ENCODE measurements at regions of chr3 and their contacts with region 1.

Region 1: GRCh38 chr3:132352541-132353143 is 35.4 kb downstream of the ACP3 start:
- DNase-seq: peak; percentile 43
- H3K4me3 Mint-ChIP-seq: no peak overlapping the region
- H3K27ac Mint-ChIP-seq: no peak overlapping the region
- H3K4me1 Mint-ChIP-seq: peaks cover 5% of the 10 kb centered on the region
- H3K27me3 Mint-ChIP-seq: no peaks in the 10 kb centered on the region

Region 2: DNA sequence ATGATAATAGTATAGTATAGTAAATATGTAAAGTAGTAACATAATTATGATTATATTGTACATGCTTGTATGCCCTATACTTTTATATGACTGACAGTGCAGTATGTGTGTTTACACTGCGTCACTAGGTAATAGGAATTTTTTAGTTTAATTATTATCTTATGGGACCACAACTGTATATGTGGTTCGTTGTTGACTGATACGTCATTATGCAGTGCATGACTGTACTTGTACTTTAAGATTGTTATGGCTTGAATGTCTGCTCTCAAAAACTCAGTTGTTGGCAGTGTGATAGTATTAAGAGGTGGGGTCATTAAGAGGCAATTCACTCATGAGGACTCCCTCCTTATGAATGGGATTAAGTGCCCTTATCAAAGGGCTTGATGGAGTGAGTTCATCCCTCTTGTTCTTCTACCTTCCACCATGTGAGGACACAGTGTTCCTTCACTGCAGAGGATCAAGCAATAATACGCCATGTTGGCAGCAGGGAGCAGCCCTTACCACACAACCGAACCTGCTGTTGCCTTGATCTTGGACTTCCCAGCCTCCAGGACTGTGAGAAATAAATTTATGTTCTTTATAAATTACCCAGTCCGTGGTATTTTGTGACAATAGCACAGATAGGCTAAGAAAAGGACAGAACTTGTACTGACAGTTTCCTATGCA is 1173.8 kb before region 1 on chr3:
- intact Hi-C with region 1: no loop called
- DNase-seq: no peak
- H3K4me3 Mint-ChIP-seq: no peak overlapping the region
- H3K27ac Mint-ChIP-seq: no peak overlapping the region
- H3K4me1 Mint-ChIP-seq: peaks cover 8% of the 10 kb centered on the region
- H3K27me3 Mint-ChIP-seq: peaks cover 3% of the 10 kb centered on the region

Region 3: GRCh38 chr3:132399054-132399929 is 46.6 kb after region 1 on chr3:
- intact Hi-C with region 1: loop called (anchors 1 kb)
- DNase-seq: no peak
- H3K4me3 Mint-ChIP-seq: no peak overlapping the region
- H3K27ac Mint-ChIP-seq: no peak overlapping the region
- H3K4me1 Mint-ChIP-seq: no peaks in the 10 kb centered on the region
- H3K27me3 Mint-ChIP-seq: peaks cover 18% of the 10 kb centered on the region

Region 4: DNA sequence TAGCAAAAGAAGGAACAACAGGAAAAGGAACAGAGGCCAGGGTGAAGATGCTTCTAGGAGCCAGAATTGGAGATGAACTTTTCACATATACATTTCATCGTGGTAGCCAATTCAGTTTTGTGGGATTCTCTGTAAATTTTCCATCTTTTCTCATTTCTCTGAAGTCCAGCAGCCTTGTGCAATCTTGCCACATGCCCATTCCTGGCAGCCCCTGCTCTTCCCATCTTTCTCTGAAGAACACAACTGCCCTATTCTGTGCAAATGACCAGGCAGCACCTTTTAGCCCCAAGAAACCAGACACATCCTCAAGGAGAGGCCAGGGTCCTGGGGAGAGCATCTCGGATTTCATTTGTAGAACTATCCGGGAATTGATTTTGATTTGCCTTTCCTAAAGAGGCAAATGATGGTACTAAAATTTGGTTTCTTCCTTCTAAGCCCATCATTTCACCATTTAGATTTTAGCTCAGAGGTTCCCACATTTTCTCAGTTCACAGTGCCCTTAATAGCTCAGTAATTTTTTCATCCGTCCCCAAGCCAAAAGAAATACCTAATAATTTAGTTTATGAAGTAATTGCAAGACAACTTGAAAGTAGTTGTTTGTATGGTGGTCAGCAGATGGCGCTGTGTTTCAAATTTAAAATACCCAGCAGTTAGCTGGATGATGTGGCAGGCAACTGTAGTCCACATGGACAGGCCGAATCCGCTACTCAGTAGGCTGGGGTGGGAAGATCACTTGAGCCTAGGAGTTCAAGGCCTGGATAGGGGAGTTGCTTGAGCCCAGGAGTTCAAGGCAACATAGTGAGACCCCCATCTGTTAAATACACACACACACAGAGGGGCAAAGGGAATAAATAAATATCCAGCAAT is 183.2 kb after region 1 on chr3:
- intact Hi-C with region 1: loop called (anchors 2 kb)
- DNase-seq: peak; percentile 17
- H3K4me3 Mint-ChIP-seq: no peak overlapping the region
- H3K27ac Mint-ChIP-seq: peak overlapping the region; percentile 86
- H3K4me1 Mint-ChIP-seq: peaks cover 22% of the 10 kb centered on the region
- H3K27me3 Mint-ChIP-seq: no peaks in the 10 kb centered on the region

Region 5: GRCh38 chr3:132641837-132642538 is 289.3 kb after region 1 on chr3:
- intact Hi-C with region 1: loop called (anchors 1 kb)
- DNase-seq: no peak
- H3K4me3 Mint-ChIP-seq: no peak overlapping the region
- H3K27ac Mint-ChIP-seq: no peak overlapping the region
- H3K4me1 Mint-ChIP-seq: peaks cover 4% of the 10 kb centered on the region
- H3K27me3 Mint-ChIP-seq: no peaks in the 10 kb centered on the region

Region 6: DNA sequence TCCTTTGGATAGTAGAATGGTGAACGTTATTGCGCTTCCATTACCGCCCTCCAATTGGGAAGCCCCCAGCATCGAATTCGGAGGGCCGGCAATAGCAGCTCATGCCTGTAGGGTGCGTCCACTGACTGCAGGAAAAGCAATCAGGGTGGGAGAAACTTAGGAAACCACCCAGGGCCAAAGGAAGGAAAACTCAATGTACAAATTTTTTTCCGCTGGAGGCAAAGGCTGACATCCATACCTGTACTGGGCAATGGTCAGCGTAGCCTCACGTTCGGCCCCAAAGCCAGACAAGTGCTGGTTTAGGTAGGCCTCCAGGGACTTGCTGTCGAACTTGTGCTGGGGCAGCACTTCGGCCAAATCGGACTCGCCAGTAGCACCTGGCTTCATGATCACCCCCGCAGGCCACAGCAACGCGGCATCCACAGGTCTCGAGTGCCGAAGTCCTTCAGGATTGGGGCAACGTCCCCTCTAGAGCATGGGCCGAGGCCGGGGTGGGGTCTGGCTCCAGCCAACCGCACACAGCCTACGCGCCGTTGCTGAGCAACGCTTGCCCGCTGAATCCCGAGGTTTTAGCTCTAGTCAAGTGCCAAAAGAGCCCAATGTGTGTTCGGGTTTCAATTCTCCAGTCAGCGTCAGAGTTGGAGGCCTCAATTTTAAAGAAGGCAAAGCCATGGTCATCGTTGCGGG is 306.9 kb after region 1 on chr3 and contains the start of gene ACAD11:
- intact Hi-C with region 1: loop called (anchors 1 kb)
- DNase-seq: peak; percentile 24
- H3K4me3 Mint-ChIP-seq: peak within 1 kb of the TSS; percentile 97
- H3K27ac Mint-ChIP-seq: peak within 1 kb of the TSS; percentile 98
- H3K4me1 Mint-ChIP-seq: peaks cover 44% of the 10 kb centered on the region
- H3K27me3 Mint-ChIP-seq: no peaks in the 10 kb centered on the region
- total RNA-seq, gene ACAD11: 14.1 and 14.3 TPM in 2 replicates

Region 7: DNA sequence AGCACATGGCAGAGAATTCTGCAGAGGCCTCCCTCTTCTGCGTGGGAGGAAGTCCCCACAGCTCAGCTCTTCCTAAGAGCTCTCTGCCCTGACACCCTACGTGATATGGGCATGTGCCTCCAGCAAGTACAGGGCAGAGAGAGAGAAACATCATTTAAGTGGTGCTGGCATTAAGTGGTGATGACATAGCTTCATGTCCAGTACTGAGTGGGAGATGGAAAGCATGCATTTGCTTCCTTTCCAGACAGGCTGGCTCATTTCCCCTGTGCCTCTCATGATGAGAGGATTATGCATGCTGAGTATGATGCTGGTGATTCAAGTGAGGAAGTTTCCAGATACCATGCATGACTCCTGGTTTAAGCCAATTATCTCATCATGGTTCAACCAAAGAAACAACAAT is 1074.1 kb after region 1 on chr3:
- intact Hi-C with region 1: loop called (anchors 10 kb)
- DNase-seq: no peak
- H3K4me3 Mint-ChIP-seq: no peak overlapping the region
- H3K27ac Mint-ChIP-seq: no peak overlapping the region
- H3K4me1 Mint-ChIP-seq: peaks cover 9% of the 10 kb centered on the region
- H3K27me3 Mint-ChIP-seq: peaks cover 8% of the 10 kb centered on the region